Dorsolateral prefrontal cortex (tissue), 120 donors: ENCODE measurements at regions of chr19 and their contacts with region 1.

Region 1: DNA sequence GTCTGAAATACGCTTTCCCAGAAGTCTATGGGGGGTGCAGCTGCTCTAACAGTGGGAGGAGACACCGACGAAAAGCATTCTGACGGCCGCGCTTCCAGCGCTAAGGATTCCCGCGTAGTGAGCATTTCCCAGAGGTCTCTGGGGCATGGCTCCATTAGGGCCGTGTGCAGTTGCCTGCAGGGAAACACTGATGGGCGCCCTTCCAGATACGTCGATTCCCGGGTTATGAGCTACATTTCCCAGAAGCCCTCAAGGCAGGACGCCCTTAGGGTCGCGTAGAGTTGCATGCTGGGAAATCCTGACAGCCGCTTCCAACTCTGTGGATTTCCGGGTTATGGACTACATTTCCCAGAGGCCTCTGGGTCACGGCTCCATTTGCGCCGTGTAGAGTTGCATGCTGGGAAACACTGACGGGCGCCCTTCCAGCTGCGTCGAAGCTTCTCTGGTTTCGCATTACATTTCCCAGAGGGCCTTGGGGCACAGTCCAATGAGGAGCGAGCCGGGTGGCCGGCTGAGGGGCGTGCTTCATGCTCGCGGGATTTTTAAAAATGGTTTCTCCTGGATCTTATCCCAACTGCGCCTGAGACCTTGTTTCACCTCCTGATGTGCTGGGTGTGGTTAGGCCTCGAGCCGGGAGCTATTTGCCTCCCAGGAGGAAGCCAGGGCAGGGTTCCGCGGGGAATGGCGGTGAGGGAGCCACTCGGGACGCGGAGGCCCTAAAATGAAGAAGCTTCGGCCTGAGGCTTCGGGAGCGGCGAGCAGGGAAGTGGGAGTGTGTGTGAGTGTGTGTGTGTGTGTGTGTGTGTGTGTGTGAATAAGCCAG is 17.2 kb upstream of the ZNF331 start:
- DNase-seq: peak; percentile 91 to 98 (median 96)
- H3K4me3 ChIP-seq: peak overlapping the region; percentile 34 to 76 (median 69)
- H3K27ac ChIP-seq: peak overlapping the region; percentile 49 to 97 (median 89)
- H3K27me3 ChIP-seq: no peaks in the 10 kb centered on the region
- CTCF ChIP-seq: peak in 38 of 56 donors; percentile 3 to 58 (median 33)

Region 2: GRCh38 chr19:53424968-53425597 is 95.7 kb before region 1 on chr19:
- intact Hi-C with region 1: loop called (anchors 5 to 10 kb)
- DNase-seq: peak; percentile 56 to 79 (median 72)
- H3K4me3 ChIP-seq: peak overlapping the region in 1 of 59 donors; percentile 3
- H3K27ac ChIP-seq: no peak overlapping the region
- H3K27me3 ChIP-seq: no peaks in the 10 kb centered on the region
- CTCF ChIP-seq: peak; percentile 48 to 95 (median 81)

Region 3: GRCh38 chr19:53431399-53432087 is 89.2 kb before region 1 on chr19 and contains the start of gene ZNF761:
- intact Hi-C with region 1: loop called (anchors 5 to 10 kb)
- DNase-seq: peak; percentile 90 to 97 (median 94)
- H3K4me3 ChIP-seq: peak within 1 kb of the TSS; percentile 47 to 89 (median 73)
- H3K27ac ChIP-seq: peak within 1 kb of the TSS in 48 of 59 donors; percentile 11 to 84 (median 64)
- H3K27me3 ChIP-seq: no peaks in the 10 kb centered on the region
- CTCF ChIP-seq: peak in 51 of 56 donors; percentile 13 to 74 (median 47)
- total RNA-seq, gene ZNF761: 4.5 to 17.6 (median 8.0) TPM

Region 4: GRCh38 chr19:53492153-53492552 is 28.6 kb before region 1 on chr19:
- intact Hi-C with region 1: no loop called
- DNase-seq: no peak
- H3K4me3 ChIP-seq: no peak overlapping the region
- H3K27ac ChIP-seq: no peak overlapping the region
- H3K27me3 ChIP-seq: no peaks in the 10 kb centered on the region
- CTCF ChIP-seq: no peak

Region 5: DNA sequence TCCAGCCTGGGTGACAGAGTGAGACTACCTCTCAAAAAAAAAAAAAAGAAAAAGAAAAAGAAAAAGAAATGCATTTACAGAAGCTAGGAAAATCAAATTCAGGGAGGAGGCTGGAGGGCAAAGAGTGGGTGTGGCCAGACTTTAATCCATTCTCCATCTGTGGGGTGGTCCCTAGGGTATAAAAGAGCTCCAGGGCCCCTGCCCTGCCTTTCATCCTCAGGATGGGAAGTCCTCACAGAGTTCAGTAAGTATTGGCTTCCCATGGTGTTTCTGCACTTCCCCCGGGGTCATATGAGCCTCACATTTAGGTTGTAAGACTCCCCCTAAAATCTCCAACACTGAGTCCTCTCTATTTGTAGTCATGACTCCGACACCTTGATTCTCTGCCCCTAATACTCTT is 144.0 kb after region 1 on chr19:
- intact Hi-C with region 1: loop called in 1 of 2 experiments (anchors 10 kb)
- DNase-seq: no peak
- H3K4me3 ChIP-seq: no peak overlapping the region
- H3K27ac ChIP-seq: no peak overlapping the region
- H3K27me3 ChIP-seq: peaks cover 0 to 3% (median 0%) of the 10 kb centered on the region in 45 donors
- CTCF ChIP-seq: no peak